ENCODE measurements at regions of chr4 and their contacts with region 1.

Region 1: GRCh38 chr4:83484500-83485461 is at the start of gene ABRAXAS1:
- DNase-seq: peak; percentile 97
- ATAC-seq: peak; percentile 97
- H3K4me3 ChIP-seq: peak within 1 kb of the TSS; percentile 71 to 87 (median 77)
- H3K4me3 Mint-ChIP-seq: peak within 1 kb of the TSS; percentile 99
- H3K27ac ChIP-seq: peak within 1 kb of the TSS; percentile 60 to 70
- H3K27ac Mint-ChIP-seq: peak within 1 kb of the TSS; percentile 95
- H3K4me1 ChIP-seq: peaks cover 10 to 17% of the 10 kb centered on the region in 2 donors
- H3K4me1 Mint-ChIP-seq: peaks cover 21% of the 10 kb centered on the region
- H3K27me3 ChIP-seq: no peaks in the 10 kb centered on the region
- H3K27me3 Mint-ChIP-seq: no peaks in the 10 kb centered on the region
- CTCF ChIP-seq: no peak
- total RNA-seq, gene ABRAXAS1: 34.4 and 38.4 TPM in 2 replicates

Region 2: DNA sequence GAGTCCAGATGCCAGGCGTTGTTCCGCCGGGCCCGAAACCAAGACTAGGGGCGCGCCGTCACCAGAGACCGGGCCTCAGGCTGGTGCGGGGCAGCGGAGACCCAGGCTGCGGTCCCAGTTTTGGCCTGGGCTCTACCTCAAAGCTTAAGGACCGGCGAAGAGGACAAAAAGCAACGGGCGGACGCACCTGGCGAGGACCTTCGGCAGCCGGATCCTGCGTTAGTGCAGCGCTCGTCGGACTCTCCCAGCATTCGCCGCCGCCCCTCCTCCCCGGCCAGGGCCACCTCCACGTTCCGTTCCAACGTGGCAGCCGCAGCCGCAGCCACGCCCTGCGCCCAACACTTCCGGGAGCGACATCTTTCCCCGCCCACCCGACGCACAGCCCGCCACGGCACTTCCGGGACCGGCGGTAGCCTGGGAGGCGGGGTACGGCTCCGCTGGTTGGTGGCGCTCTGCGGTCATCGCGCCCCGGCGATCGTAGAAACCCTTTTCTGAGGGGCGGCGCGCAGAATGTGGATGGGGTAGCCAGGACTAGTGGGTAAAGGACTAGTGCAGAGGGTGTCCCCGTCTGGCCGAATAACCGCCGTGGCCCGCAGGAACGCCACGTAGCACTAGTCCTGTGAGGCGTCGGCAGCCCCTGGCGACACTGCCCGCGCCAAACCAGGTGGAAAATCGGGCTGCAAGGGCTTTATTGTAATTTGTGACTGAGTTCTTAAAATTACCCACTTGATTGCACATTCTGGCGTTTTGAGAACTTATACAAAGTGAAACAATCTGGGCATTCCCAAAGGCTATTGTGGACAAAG is 593.7 kb before region 1 on chr4 and contains the start of gene SEC31A:
- CTCF ChIA-PET with region 1: no interaction called
- POLR2A ChIA-PET with region 1: no interaction called
- intact Hi-C with region 1: loop called (anchors 10 kb)
- DNase-seq: peak; percentile 98
- ATAC-seq: peak; percentile 92
- H3K4me3 ChIP-seq: peak within 1 kb of the TSS; percentile 76 to 94 (median 85)
- H3K4me3 Mint-ChIP-seq: peak within 1 kb of the TSS; percentile 92
- H3K27ac ChIP-seq: peak within 1 kb of the TSS; percentile 87 to 93
- H3K27ac Mint-ChIP-seq: peak within 1 kb of the TSS; percentile 97
- H3K4me1 ChIP-seq: peaks cover 17 to 18% of the 10 kb centered on the region in 2 donors
- H3K4me1 Mint-ChIP-seq: peaks cover 35% of the 10 kb centered on the region
- H3K27me3 ChIP-seq: no peaks in the 10 kb centered on the region
- H3K27me3 Mint-ChIP-seq: no peaks in the 10 kb centered on the region
- CTCF ChIP-seq: peak; percentile 2
- total RNA-seq, gene SEC31A: 134 and 141 TPM in 2 replicates

Region 3: DNA sequence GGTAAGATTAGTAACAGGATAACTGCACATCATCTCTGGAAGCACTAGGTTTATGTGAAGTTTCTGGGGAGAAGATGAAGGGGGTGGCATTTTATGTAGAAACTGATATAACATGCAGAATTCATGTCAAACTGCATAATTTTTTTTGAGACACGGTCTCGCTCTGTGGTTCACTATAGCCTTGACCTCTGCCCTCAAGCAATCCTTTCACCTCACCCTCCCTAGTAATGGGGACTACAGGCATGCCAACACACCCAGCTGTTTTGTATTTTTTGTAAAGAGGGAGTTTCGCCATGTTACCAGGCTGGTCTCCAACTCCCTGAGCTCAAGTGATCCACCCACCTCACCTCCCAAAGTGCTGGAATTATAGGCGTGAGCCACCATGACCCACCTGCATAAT is 11.4 kb before region 1 on chr4:
- CTCF ChIA-PET with region 1: no interaction called
- POLR2A ChIA-PET with region 1: no interaction called
- intact Hi-C with region 1: no loop called
- DNase-seq: no peak
- ATAC-seq: no peak
- H3K4me3 ChIP-seq: no peak overlapping the region
- H3K4me3 Mint-ChIP-seq: no peak overlapping the region
- H3K27ac ChIP-seq: no peak overlapping the region
- H3K27ac Mint-ChIP-seq: no peak overlapping the region
- H3K4me1 ChIP-seq: no peaks in the 10 kb centered on the region
- H3K4me1 Mint-ChIP-seq: no peaks in the 10 kb centered on the region
- H3K27me3 ChIP-seq: no peaks in the 10 kb centered on the region
- H3K27me3 Mint-ChIP-seq: no peaks in the 10 kb centered on the region
- CTCF ChIP-seq: no peak

Measured in B cell (primary cell).